Caco-2 (cell line): ENCODE measurements at regions of chr1 and their contacts with region 1.

Region 1: GRCh38 chr1:231211005-231211857 is 29.8 kb upstream of the GNPAT start:
- DNase-seq: peak; percentile 95 to 97
- H3K4me3 ChIP-seq: peak overlapping the region; percentile 42
- H3K4me3 Mint-ChIP-seq: peak overlapping the region; percentile 79
- H3K27ac Mint-ChIP-seq: peak overlapping the region; percentile 90
- H3K4me1 ChIP-seq: peaks cover 39% of the 10 kb centered on the region
- H3K4me1 Mint-ChIP-seq: peaks cover 28% of the 10 kb centered on the region
- H3K27me3 ChIP-seq: no peaks in the 10 kb centered on the region
- H3K27me3 Mint-ChIP-seq: no peaks in the 10 kb centered on the region
- CTCF ChIP-seq: peak; percentile 90 to 97

Region 2: GRCh38 chr1:230797942-230798418 is 413.3 kb before region 1 on chr1:
- CTCF ChIA-PET with region 1: interaction called, 3 read pairs
- POLR2A ChIA-PET with region 1: no interaction called
- intact Hi-C with region 1: loop called (anchors 1 kb)
- DNase-seq: peak; percentile 70 to 73
- H3K4me3 ChIP-seq: no peak overlapping the region
- H3K4me3 Mint-ChIP-seq: no peak overlapping the region
- H3K27ac Mint-ChIP-seq: no peak overlapping the region
- H3K4me1 ChIP-seq: no peaks in the 10 kb centered on the region
- H3K4me1 Mint-ChIP-seq: peaks cover 7% of the 10 kb centered on the region
- H3K27me3 ChIP-seq: no peaks in the 10 kb centered on the region
- H3K27me3 Mint-ChIP-seq: no peaks in the 10 kb centered on the region
- CTCF ChIP-seq: peak; percentile 76 to 83

Region 3: DNA sequence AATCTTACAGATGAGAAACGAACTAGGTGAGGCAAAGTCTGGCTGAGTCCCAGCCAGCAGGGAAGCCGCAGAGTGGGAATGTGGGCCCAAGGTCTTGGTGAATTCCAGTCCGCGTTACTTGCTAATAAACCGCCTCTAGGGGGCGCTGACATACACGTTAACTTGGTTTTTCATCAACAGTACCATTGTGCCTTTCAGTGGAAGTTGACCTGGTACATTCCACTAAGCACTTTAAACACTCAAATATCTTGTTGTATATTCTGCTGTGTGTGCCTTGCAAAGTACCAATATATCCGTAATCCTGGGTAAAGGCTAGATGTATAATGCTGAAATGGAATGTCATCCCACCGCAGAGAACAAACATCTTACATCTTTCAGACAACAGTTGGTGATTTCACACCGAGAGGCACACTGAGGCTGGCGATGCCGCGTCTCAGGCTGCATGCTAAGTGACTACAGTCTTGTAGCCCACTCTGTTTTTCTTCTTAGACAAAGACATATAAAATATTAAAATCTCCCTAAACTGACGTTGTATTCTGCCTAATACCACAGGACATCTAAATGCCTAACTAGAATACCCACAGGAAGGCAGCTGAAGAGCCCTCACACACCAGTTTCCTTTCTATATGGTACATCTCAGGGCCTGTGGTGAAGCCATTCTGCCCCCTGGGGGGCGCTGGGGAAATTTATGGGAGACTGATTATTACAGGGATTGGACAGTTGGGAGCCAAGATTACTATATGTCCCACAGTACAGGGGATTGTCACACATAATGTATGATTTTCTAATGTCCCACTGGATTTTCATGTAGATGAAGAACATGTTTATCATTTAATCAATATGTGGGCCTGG is 293.7 kb before region 1 on chr1:
- CTCF ChIA-PET with region 1: interaction called, 3 read pairs
- POLR2A ChIA-PET with region 1: no interaction called
- intact Hi-C with region 1: loop called (anchors 1 kb)
- DNase-seq: peak; percentile 84
- H3K4me3 ChIP-seq: no peak overlapping the region
- H3K4me3 Mint-ChIP-seq: no peak overlapping the region
- H3K27ac Mint-ChIP-seq: no peak overlapping the region
- H3K4me1 ChIP-seq: peaks cover 25% of the 10 kb centered on the region
- H3K4me1 Mint-ChIP-seq: peaks cover 33% of the 10 kb centered on the region
- H3K27me3 ChIP-seq: no peaks in the 10 kb centered on the region
- H3K27me3 Mint-ChIP-seq: no peaks in the 10 kb centered on the region
- CTCF ChIP-seq: peak; percentile 69 to 70

Region 4: DNA sequence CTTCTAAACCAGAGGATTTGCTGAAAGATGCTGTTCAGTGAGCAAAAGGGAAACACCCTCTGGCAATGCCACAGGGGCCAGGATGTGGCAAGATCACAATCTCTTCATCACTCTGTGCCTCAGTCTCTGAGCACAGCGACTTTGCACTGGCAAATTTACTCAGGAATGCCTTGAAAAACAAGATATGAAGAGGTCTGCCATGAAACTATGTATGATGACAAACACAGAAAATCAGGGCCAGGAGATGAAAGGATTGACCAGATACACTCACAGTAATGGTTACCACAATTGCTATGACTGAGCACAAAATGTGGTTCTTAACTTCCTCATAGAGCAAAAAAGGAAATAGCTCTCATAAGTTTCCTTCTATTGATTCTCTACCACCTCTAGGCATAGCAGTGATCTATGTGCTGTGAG is 238.4 kb before region 1 on chr1:
- CTCF ChIA-PET with region 1: no interaction called
- POLR2A ChIA-PET with region 1: interaction called, 11 read pairs
- intact Hi-C with region 1: loop called (anchors 2 kb)
- DNase-seq: peak; percentile 39 to 57
- H3K4me3 ChIP-seq: no peak overlapping the region
- H3K4me3 Mint-ChIP-seq: peak overlapping the region; percentile 20
- H3K27ac Mint-ChIP-seq: peak overlapping the region; percentile 60
- H3K4me1 ChIP-seq: peaks cover 63% of the 10 kb centered on the region
- H3K4me1 Mint-ChIP-seq: peaks cover 47% of the 10 kb centered on the region
- H3K27me3 ChIP-seq: no peaks in the 10 kb centered on the region
- H3K27me3 Mint-ChIP-seq: no peaks in the 10 kb centered on the region
- CTCF ChIP-seq: no peak

Region 5: GRCh38 chr1:231020139-231020601 is 191.1 kb before region 1 on chr1:
- CTCF ChIA-PET with region 1: interaction called, 10 read pairs
- POLR2A ChIA-PET with region 1: no interaction called
- intact Hi-C with region 1: loop called (anchors 1 kb)
- DNase-seq: no peak
- H3K4me3 ChIP-seq: no peak overlapping the region
- H3K4me3 Mint-ChIP-seq: no peak overlapping the region
- H3K27ac Mint-ChIP-seq: no peak overlapping the region
- H3K4me1 ChIP-seq: no peaks in the 10 kb centered on the region
- H3K4me1 Mint-ChIP-seq: no peaks in the 10 kb centered on the region
- H3K27me3 ChIP-seq: no peaks in the 10 kb centered on the region
- H3K27me3 Mint-ChIP-seq: no peaks in the 10 kb centered on the region
- CTCF ChIP-seq: no peak

Region 6: DNA sequence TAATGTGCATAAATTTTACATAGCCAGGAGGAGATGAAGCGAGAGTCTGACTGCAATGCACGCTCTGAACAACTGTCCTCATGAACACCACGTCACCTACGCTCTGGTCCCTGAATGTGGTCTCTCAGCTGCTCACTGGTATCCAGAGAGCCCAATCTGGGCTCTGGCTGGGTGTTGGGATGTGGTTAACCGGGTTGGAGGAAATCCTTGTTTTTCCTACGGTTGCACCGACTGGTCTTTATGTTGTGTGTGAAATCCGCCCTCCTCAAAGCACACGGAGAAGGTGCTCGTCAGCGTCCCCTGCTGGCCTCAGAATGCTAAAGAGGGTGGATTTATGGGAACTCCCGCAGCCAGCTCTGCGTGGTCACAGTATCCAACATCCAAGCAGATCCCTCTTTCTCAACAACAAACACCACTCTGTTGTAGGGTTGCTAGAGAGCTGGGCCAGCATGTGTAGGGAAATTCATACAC is 119.4 kb before region 1 on chr1:
- CTCF ChIA-PET with region 1: interaction called, 9 read pairs
- POLR2A ChIA-PET with region 1: no interaction called
- intact Hi-C with region 1: loop called (anchors 1 kb)
- DNase-seq: peak; percentile 45 to 51
- H3K4me3 ChIP-seq: no peak overlapping the region
- H3K4me3 Mint-ChIP-seq: no peak overlapping the region
- H3K27ac Mint-ChIP-seq: no peak overlapping the region
- H3K4me1 ChIP-seq: no peaks in the 10 kb centered on the region
- H3K4me1 Mint-ChIP-seq: no peaks in the 10 kb centered on the region
- H3K27me3 ChIP-seq: no peaks in the 10 kb centered on the region
- H3K27me3 Mint-ChIP-seq: no peaks in the 10 kb centered on the region
- CTCF ChIP-seq: peak; percentile 66 to 76

Region 7: DNA sequence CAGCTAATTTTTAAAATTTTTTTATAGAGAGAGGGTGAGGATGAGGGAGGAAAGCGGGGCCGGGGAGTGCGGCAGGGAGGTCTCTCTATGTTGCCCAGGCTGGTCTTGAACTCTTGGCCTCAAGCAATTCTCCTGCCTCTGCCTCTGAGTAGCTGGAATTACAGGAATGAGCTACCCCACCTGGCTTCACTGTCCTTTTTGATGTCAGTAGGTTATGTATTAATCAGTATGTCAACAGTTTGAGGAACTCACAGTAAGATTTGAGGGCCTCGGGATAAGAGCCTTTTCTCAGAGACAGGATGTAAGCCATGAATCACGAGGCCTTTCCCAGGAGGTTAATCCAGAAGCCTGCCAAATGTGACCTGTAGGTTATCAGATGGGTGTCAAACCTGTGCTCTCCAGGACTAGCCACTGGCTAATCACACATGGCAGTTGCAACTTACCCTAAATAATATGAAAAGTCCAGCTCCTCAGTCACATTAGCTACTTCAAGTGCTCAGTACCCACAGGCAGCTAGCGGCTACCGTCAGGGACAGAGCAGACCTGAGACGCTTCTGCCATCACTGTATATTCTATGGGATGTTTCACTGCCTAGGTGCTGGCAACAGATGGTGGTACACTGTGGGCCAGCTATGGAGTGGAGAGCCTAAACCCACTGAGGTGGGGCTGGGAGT is 16.3 kb before region 1 on chr1:
- CTCF ChIA-PET with region 1: interaction called, 8 read pairs
- POLR2A ChIA-PET with region 1: no interaction called
- intact Hi-C with region 1: loop called (anchors 1 kb)
- DNase-seq: peak; percentile 82 to 91
- H3K4me3 ChIP-seq: no peak overlapping the region
- H3K4me3 Mint-ChIP-seq: no peak overlapping the region
- H3K27ac Mint-ChIP-seq: no peak overlapping the region
- H3K4me1 ChIP-seq: peaks cover 32% of the 10 kb centered on the region
- H3K4me1 Mint-ChIP-seq: peaks cover 25% of the 10 kb centered on the region
- H3K27me3 ChIP-seq: no peaks in the 10 kb centered on the region
- H3K27me3 Mint-ChIP-seq: no peaks in the 10 kb centered on the region
- CTCF ChIP-seq: no peak

Region 8: GRCh38 chr1:231226156-231226555 is 14.9 kb after region 1 on chr1:
- CTCF ChIA-PET with region 1: no interaction called
- POLR2A ChIA-PET with region 1: no interaction called
- intact Hi-C with region 1: no loop called
- DNase-seq: no peak
- H3K4me3 ChIP-seq: no peak overlapping the region
- H3K4me3 Mint-ChIP-seq: no peak overlapping the region
- H3K27ac Mint-ChIP-seq: no peak overlapping the region
- H3K4me1 ChIP-seq: peaks cover 4% of the 10 kb centered on the region; the same call in 1 of the 2 replicates
- H3K4me1 Mint-ChIP-seq: peaks cover 11% of the 10 kb centered on the region
- H3K27me3 ChIP-seq: no peaks in the 10 kb centered on the region
- H3K27me3 Mint-ChIP-seq: no peaks in the 10 kb centered on the region
- CTCF ChIP-seq: no peak

Region 9: DNA sequence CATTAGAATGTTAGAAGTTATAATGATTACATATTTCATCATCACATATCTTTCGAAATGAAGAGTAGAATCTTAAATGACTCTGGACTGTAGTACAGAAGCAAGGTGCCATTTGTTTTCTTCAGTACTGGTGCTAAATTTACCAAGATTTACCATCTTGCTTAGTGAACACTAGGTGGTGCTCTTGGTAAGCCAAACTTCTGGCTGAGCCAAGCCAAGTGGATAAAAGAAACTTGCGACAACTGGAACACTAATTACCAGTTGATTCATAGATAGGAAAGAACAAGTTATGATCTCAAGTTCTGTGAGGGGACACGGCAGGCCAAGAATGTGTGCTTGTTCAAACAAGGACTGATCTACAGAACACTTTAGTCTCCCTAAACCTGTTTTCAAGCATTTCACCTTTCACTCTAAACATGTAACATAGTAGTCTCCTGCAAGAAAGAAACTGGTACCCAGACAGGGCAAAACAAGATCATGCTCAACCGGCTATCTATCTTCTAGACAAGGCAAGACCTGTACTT is 146.7 kb after region 1 on chr1:
- CTCF ChIA-PET with region 1: no interaction called
- POLR2A ChIA-PET with region 1: no interaction called
- intact Hi-C with region 1: no loop called
- DNase-seq: peak in 1 of 2 experiments; percentile 57
- H3K4me3 ChIP-seq: no peak overlapping the region
- H3K4me3 Mint-ChIP-seq: no peak overlapping the region
- H3K27ac Mint-ChIP-seq: no peak overlapping the region
- H3K4me1 ChIP-seq: no peaks in the 10 kb centered on the region
- H3K4me1 Mint-ChIP-seq: no peaks in the 10 kb centered on the region
- H3K27me3 ChIP-seq: no peaks in the 10 kb centered on the region
- H3K27me3 Mint-ChIP-seq: no peaks in the 10 kb centered on the region
- CTCF ChIP-seq: peak; percentile 64 to 76